Gastrocnemius medialis (tissue), 4 donors: ENCODE measurements at regions of chr11 and their contacts with region 1.

Region 1: DNA sequence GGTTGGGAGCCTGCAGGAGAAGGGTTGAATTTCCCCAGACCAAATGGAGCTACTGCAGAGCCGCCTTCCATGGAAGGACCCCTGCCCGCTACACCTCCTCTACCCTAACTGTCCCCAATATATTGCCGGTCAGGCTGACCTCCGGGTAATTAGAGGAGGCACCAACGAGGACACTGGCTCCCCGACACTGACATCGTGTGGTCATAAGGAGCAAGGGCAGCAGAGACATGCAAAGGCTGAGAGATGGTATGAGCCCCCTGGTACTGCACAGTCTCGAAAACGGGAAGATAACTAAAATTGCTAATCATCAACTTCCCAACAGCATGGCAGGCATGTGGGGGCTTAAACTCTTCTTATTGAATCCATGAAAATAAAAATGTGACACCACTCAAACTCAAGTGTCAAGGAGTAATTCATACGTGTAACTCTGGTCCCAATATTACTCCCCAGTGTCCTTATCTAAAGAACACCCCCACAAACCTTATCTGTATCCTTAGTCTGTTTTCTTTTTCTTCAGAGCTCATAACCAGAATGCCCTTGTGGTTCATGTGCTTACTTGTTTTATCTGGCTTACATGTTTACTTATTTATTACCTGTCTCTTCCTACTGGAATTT is 4.4 kb downstream of the CAVIN3 start:
- DNase-seq: peak; percentile 41 to 46
- ATAC-seq: peak; percentile 38 to 41
- H3K4me3 ChIP-seq: peak overlapping the region in 3 of 4 donors; percentile 10 to 18 (median 17)
- H3K27ac ChIP-seq: peak overlapping the region in 1 of 4 donors; percentile 22
- H3K4me1 ChIP-seq: peaks cover 19 to 22% of the 10 kb centered on the region in 2 donors
- H3K27me3 ChIP-seq: no peaks in the 10 kb centered on the region
- CTCF ChIP-seq: peak; percentile 57 to 84 (median 76)
- POLR2A ChIP-seq: no peak

Region 2: DNA sequence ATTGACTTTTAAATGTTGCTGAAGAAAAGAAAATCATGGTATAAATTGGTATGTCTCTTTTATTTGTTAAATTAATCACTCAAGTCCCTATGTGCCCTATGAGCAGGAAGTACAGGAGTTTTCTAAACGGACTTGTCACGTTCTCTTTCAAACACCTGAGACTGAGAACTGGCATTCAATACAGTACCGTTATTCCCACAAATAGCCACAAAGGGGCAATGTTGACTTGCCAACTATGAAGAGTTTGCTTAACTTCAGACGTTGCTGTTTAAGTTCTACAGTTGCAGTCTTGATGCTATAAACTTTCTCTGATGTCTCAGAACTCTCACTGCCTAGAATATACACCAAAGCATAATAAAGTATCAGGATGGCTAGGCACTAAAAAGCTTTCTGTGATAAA is 293.0 kb before region 1 on chr11:
- in situ Hi-C with region 1: loop called in 1 of 4 experiments (anchors 25 kb)
- intact Hi-C with region 1: no loop called
- DNase-seq: no peak
- ATAC-seq: no peak
- H3K4me3 ChIP-seq: no peak overlapping the region
- H3K27ac ChIP-seq: no peak overlapping the region
- H3K4me1 ChIP-seq: no peaks in the 10 kb centered on the region
- H3K27me3 ChIP-seq: no peaks in the 10 kb centered on the region
- CTCF ChIP-seq: peak in 3 of 5 experiments; percentile 17 to 43 (median 39)
- POLR2A ChIP-seq: no peak

Region 3: GRCh38 chr11:6251120-6251733 is 64.7 kb before region 1 on chr11:
- in situ Hi-C with region 1: no loop called
- intact Hi-C with region 1: loop called (anchors 1 kb)
- DNase-seq: peak in 1 of 2 donors; percentile 59
- ATAC-seq: peak; percentile 76 to 94
- H3K4me3 ChIP-seq: no peak overlapping the region
- H3K27ac ChIP-seq: no peak overlapping the region
- H3K4me1 ChIP-seq: no peaks in the 10 kb centered on the region
- H3K27me3 ChIP-seq: no peaks in the 10 kb centered on the region
- CTCF ChIP-seq: peak; percentile 69 to 92 (median 77)
- POLR2A ChIP-seq: no peak

Region 4: DNA sequence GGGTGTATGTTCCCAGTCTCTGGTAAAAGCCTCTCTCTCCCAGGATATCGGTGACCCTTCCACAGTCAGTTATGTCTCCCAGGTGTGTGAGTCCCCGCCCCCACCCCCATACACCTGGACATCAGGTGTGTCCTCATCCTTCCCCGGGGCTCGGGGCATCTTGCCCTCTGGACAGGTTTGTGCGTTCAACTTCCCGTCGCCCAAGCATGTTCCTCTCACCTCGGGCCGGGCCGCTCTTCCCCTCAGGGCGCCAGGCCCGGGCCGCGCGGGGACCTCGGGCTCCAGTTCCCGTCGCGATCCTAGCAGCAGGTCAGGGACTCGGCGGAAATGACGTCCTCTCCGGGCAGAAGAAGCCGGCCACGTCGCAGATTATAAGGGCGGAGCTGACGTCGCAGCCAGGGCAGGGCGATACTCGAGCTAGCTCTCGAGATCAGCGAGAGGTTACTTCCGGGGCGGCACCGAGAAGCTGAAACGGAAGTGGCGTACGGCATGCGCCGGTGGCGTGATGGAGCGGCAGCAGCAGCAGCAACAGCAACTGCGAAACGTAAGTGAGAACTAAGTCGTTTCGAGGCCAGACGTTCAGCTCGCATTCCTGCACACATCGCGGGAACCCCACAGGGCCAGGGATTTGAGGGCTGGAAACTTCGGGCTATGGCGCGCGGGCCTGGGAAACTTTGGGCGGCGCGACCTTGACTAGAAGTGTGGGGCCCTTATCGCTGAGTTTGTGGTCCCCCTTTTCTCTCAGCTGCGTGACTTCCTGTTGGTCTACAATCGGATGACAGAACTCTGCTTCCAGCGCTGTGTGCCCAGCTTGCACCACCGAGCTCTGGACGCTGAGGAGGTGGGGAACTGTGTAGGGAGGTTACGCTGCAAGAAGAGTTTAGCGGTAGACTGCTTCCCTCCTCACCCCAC is 165.3 kb after region 1 on chr11 and contains the starts of genes ARFIP2 and TIMM10B:
- in situ Hi-C with region 1: no loop called
- intact Hi-C with region 1: loop called (anchors 5 kb)
- DNase-seq: peak; percentile 98 to 99
- ATAC-seq: peak; percentile 98 to 99
- H3K4me3 ChIP-seq: peak within 1 kb of the TSS; percentile 85 to 95 (median 87)
- H3K27ac ChIP-seq: peak within 1 kb of the TSS; percentile 93 to 97 (median 94)
- H3K4me1 ChIP-seq: peaks cover 24 to 31% of the 10 kb centered on the region in 2 donors
- H3K27me3 ChIP-seq: no peaks in the 10 kb centered on the region
- CTCF ChIP-seq: no peak
- POLR2A ChIP-seq: peak; percentile 93 to 97
- total RNA-seq, gene ARFIP2: 20.1 to 27.8 (median 24.4) TPM
- total RNA-seq, gene TIMM10B: 10.0 to 14.5 (median 12.4) TPM